ENCODE measurements at regions of chr12 and their contacts with region 1.

Region 1: GRCh38 chr12:5013266-5013730 is 30.4 kb upstream of the KCNA5 start:
- DNase-seq: peak; percentile 38 to 54
- ATAC-seq: peak; percentile 68 to 70
- H3K4me3 ChIP-seq: no peak overlapping the region
- H3K27ac ChIP-seq: peak overlapping the region in 3 of 4 donors; percentile 41 to 72 (median 60)
- H3K4me1 ChIP-seq: peaks cover 27 to 34% of the 10 kb centered on the region in 2 donors
- H3K27me3 ChIP-seq: no peaks in the 10 kb centered on the region
- CTCF ChIP-seq: peak in 2 of 5 experiments; percentile 12 to 33
- POLR2A ChIP-seq: no peak

Region 2: DNA sequence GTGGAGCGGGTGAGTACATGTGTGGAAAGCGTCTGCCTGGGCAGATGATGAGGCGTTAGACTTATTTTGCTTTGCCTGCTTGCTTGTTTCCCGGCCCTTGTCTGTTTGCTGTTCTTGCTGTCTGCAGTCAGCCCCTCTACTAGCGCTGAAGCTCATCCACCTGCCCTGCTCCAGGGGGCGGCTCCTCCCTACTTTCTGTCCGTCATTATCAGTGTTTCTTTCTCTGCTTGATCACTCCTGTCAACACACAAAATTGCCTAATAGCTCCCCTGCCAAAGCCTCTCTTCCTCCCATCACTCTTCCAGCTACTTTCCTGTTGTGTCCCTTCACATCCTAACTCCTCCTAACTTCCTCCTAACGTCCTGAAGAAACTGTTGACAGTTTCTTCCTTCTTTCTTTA is 328.0 kb before region 1 on chr12:
- in situ Hi-C with region 1: no loop called
- intact Hi-C with region 1: no loop called
- DNase-seq: no peak
- ATAC-seq: no peak
- H3K4me3 ChIP-seq: no peak overlapping the region
- H3K27ac ChIP-seq: no peak overlapping the region
- H3K4me1 ChIP-seq: no peaks in the 10 kb centered on the region
- H3K27me3 ChIP-seq: no peaks in the 10 kb centered on the region
- CTCF ChIP-seq: no peak
- POLR2A ChIP-seq: no peak

Region 3: DNA sequence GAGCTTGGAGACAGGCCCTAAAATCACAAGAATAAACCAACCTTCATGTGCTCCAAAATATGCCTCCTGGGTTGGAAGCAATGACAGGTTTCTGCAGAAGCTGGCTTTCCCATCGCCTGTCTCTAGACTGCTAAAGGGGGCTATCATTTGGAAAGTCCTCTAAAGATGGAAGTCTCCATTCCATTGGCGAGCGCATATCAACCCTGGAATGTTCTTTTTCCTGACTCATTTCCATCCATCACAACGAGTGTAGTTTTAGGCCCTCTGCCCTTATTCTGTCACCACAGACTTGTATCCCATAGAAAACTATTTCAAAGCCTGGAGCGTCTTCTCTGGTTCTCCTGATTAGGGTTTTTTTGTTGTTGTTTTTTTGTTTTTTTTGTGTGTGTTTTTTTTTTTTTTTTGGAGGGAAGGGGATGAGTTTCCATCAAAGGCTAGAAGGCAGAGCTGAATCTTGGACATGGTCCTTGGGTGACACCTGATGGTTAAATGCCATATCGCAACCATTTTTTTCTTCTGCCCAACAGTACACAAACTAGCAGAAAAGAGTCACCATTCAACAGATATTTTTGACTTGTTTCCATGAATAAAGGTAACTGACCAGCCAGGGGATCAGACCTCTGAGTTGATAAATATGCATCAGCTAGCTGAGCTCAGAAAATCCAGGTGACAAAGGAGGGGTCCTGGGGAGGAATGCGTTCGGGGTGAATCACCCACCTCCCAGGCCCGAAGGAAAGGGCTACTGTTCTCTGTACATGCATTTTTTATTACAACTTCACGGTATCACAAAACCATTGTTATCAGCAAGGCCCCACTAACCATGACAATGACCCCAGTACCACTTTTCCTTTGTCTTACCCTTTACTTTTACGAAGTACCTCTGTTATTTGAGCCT is 70.9 kb after region 1 on chr12:
- in situ Hi-C with region 1: loop called in 1 of 4 experiments (anchors 10 kb)
- intact Hi-C with region 1: no loop called
- DNase-seq: no peak
- ATAC-seq: peak; percentile 56 to 64
- H3K4me3 ChIP-seq: no peak overlapping the region
- H3K27ac ChIP-seq: no peak overlapping the region
- H3K4me1 ChIP-seq: no peaks in the 10 kb centered on the region
- H3K27me3 ChIP-seq: no peaks in the 10 kb centered on the region
- CTCF ChIP-seq: peak; percentile 27 to 75 (median 53)
- POLR2A ChIP-seq: no peak

Measured in gastrocnemius medialis (tissue), 4 donors.